ENCODE measurements at regions of chr12 and their contacts with region 1.

Region 1: GRCh38 chr12:123062681-123063486 is 82.4 kb downstream of the ARL6IP4 start:
- DNase-seq: peak in 2 of 3 donors; percentile 55 to 76
- H3K4me3 ChIP-seq: no peak overlapping the region
- H3K27ac ChIP-seq: peak overlapping the region in 1 of 2 experiments; percentile 18
- H3K4me1 ChIP-seq: peaks cover 2 to 76% (median 49%) of the 10 kb centered on the region in 4 experiments
- H3K27me3 ChIP-seq: no peaks in the 10 kb centered on the region

Region 2: DNA sequence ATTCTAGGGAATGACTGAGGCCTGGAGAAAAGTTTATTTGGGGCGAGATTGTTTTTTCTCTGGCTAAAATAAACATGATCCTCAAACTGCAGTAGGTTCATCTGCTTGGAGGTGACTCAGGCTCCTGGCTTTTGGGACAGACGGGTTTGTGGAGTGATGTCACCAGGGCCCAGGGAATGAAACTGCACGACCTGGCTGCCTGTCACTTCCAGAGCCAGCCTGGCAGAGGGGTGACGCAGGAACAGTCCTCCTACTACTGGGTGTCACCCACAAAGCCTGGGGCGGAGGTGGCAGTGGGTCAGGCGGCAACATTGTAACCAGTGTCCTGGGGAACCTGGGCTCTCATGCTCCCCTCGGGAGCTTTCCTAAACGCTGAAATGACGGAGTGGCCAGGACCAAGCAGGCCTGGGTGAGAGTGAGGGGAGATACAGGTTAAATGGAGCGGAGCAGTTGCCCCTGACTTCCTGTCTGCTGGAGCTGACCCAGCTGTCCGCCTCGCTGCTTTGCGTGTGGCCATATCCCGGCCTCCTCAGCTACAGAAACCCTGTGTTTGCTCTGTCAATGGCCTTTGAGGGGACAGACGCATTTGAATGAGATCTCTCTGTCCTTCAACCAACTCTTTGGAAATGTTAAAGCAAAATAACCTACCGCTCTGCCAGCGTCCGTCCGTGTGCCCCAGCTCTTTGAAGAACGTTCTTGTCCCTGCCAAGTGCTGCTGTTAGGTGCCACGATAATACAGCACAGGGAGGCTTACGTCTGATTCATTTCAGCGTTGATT is 221.2 kb before region 1 on chr12:
- CTCF ChIA-PET with region 1: no interaction called
- POLR2A ChIA-PET with region 1: no interaction called
- DNase-seq: no peak
- H3K4me3 ChIP-seq: no peak overlapping the region
- H3K27ac ChIP-seq: no peak overlapping the region
- H3K4me1 ChIP-seq: peaks cover 3 to 7% (median 4%) of the 10 kb centered on the region in 4 experiments
- H3K27me3 ChIP-seq: no peaks in the 10 kb centered on the region

Region 3: DNA sequence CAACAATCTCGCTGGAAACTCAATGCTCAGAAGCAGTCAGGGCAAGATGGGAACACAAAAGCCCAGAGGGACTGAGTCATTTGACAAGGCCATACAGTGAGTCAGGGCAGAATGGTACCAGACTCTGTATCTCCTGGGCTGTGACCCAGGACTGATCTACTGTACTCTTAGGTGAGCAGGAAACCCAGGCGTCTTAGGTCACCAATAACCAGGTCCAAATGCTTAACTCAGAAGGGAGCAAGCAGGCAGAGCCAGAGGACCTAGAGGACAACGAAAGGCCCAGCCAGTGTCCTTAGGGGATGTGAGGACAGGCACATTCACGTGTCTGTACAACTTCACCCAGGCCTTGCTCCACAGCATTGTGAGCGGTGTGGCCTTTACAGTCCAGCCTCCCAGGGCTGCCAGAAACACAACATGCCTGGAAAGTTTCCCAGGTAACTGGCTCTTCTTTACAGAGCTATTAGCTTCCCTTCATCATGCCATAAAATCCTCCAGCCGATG is 12.5 kb before region 1 on chr12:
- CTCF ChIA-PET with region 1: interaction called, 72 read pairs
- POLR2A ChIA-PET with region 1: no interaction called
- DNase-seq: no peak
- H3K4me3 ChIP-seq: no peak overlapping the region
- H3K27ac ChIP-seq: no peak overlapping the region
- H3K4me1 ChIP-seq: peaks cover 0 to 14% (median 8%) of the 10 kb centered on the region in 4 experiments
- H3K27me3 ChIP-seq: no peaks in the 10 kb centered on the region

Region 4: DNA sequence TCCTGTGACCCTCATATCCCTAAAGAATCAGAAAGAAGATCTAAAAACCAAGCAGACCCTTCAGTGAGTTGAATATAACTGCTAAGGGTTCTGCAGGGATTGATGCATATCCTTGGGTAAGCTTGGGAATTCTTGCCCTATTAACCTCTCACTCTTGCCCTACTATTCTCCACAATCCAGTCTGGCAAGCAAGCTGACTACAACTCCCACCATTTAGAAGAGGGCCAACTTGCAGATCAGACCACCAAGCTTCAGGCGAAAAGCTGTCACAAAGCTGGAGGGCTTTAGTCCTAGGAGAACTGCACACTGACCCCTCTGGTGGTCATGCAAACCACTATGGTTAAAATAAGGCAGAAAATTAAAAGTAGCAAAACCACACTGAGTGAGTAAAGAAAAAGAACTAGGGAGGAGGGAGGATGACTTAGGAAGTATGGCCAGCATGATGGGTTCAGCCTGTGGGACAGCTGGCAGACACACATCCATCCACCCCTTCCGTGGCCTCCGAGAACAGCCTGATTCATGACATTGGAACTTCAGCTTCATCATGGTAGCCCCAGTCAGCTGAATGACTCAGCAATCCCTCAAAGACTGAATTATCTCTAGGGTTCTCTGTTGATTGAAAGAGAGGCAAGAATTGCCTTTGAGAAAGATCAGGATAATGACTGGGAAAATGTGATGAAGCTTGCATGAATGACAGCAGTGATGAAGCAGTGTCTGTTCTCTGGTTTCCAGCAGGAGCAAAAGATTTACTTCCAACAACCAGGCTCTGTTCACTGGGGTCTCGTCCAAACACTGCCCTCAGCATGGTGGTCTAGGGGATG is 63.5 kb after region 1 on chr12:
- CTCF ChIA-PET with region 1: no interaction called
- POLR2A ChIA-PET with region 1: no interaction called
- DNase-seq: peak in 2 of 3 donors; percentile 73 to 76
- H3K4me3 ChIP-seq: no peak overlapping the region
- H3K27ac ChIP-seq: no peak overlapping the region
- H3K4me1 ChIP-seq: peaks cover 0 to 13% (median 11%) of the 10 kb centered on the region in 4 experiments
- H3K27me3 ChIP-seq: no peaks in the 10 kb centered on the region